ENCODE measurements at regions of chr3 and their contacts with region 1.

Region 1: DNA sequence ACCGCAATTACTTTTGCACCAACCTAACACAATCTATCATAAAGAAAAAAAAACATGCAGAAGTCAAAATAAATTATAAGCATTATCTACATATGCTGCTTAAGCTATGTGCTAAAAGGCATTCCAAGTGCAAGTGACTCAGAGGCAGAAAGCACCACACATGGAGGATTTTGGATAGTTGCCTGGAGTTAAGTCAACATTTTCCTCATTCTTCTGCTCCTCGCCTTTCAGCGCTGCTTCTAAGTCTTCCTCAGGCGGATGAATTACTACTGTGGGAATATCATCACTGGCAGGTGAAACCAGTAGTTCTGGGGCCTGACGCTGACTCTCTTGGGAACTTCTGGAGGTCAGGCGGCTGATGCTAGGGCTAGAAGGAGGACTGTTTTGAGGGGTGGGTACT is 53.1 kb downstream of the SLC4A7 start:
- DNase-seq: peak; percentile 99
- ATAC-seq: peak; percentile 92
- H3K4me3 ChIP-seq: no peak overlapping the region
- H3K27ac ChIP-seq: no peak overlapping the region
- H3K4me1 ChIP-seq: peaks cover 5% of the 10 kb centered on the region
- H3K27me3 ChIP-seq: no peaks in the 10 kb centered on the region
- CTCF ChIP-seq: no peak
- POLR2A ChIP-seq: no peak
- RAD21 ChIP-seq: peak; percentile 26; the same call in 1 of the 2 replicates

Region 2: DNA sequence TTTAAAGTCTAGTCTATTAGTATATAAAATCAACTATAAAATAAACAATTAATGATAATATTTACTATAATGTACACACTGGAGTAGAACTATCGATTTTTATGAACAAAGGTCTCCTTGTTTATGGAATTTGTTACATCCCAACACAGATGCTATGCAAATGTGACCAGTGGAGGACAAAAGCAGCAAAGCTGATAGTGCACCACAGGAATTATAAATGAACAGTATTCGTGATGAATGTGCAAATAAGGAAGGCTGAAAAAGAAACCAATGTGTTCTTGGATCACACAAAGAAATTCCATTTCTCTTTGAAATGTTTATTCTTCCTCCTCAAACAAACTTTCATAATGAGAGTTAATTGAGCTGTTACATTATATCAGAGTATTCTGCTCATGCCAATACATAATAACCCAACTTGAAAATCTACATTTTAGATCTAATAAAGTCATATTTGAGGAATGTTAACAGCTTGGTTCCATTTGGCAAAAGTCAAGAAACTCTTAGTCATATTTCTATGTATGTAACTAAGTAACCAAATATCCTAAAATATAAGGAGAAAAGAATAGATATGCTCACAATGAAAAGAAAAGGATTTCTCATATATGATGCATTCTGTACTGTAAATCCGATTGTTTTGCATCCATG is 141.2 kb before region 1 on chr3:
- CTCF ChIA-PET with region 1: no interaction called
- POLR2A ChIA-PET with region 1: no interaction called
- dilution Hi-C with region 1: no loop called
- in situ Hi-C with region 1: no loop called
- intact Hi-C with region 1: no loop called
- DNase-seq: peak; percentile 56
- ATAC-seq: peak; percentile 50
- H3K4me3 ChIP-seq: no peak overlapping the region
- H3K27ac ChIP-seq: peak overlapping the region; percentile 37; the same call in 1 of the 2 replicates
- H3K4me1 ChIP-seq: peaks cover 9% of the 10 kb centered on the region
- H3K27me3 ChIP-seq: no peaks in the 10 kb centered on the region
- CTCF ChIP-seq: no peak
- POLR2A ChIP-seq: no peak
- RAD21 ChIP-seq: no peak

Region 3: GRCh38 chr3:27533718-27534573 is 102.8 kb after region 1 on chr3:
- CTCF ChIA-PET with region 1: no interaction called
- POLR2A ChIA-PET with region 1: no interaction called
- dilution Hi-C with region 1: no loop called
- in situ Hi-C with region 1: no loop called
- intact Hi-C with region 1: loop called (anchors 5 kb)
- DNase-seq: peak; percentile 99
- ATAC-seq: peak; percentile 93
- H3K4me3 ChIP-seq: no peak overlapping the region
- H3K27ac ChIP-seq: peak overlapping the region; percentile 77
- H3K4me1 ChIP-seq: peaks cover 21% of the 10 kb centered on the region
- H3K27me3 ChIP-seq: no peaks in the 10 kb centered on the region
- CTCF ChIP-seq: peak; percentile 76
- POLR2A ChIP-seq: no peak
- RAD21 ChIP-seq: peak; percentile 72

Region 4: DNA sequence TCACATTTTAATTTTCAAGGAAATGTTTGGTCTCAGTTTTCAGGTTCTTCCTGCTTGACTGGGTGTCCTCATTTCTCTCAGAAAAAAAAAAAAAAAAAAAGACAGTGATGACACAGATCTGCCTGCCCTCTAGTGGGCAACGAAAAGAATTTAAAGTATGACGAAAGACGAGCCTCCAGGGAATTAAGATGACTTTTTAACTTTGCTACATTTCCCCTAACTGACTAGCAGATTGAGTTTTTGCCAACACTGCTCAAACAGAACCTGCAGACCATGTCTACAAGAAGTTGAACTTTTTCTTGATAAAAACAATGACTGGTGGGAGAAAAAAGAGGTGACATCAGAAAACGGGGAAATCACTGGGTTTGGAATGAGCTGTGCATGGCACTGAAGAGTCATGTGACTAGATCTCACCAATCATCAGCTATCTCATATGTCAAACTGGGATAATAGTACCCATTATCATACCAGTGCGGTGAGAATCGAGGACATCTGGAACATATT is 250.2 kb after region 1 on chr3:
- CTCF ChIA-PET with region 1: interaction called, 3 read pairs
- POLR2A ChIA-PET with region 1: no interaction called
- dilution Hi-C with region 1: no loop called
- in situ Hi-C with region 1: no loop called
- intact Hi-C with region 1: loop called (anchors 5 kb)
- DNase-seq: peak; percentile 83
- ATAC-seq: peak; percentile 52
- H3K4me3 ChIP-seq: peak overlapping the region; percentile 28; the same call in 1 of the 2 replicates
- H3K27ac ChIP-seq: peak overlapping the region; percentile 55; the same call in 1 of the 2 replicates
- H3K4me1 ChIP-seq: peaks cover 10% of the 10 kb centered on the region
- H3K27me3 ChIP-seq: no peaks in the 10 kb centered on the region
- CTCF ChIP-seq: peak; percentile 81
- POLR2A ChIP-seq: no peak
- RAD21 ChIP-seq: peak; percentile 72

Region 5: DNA sequence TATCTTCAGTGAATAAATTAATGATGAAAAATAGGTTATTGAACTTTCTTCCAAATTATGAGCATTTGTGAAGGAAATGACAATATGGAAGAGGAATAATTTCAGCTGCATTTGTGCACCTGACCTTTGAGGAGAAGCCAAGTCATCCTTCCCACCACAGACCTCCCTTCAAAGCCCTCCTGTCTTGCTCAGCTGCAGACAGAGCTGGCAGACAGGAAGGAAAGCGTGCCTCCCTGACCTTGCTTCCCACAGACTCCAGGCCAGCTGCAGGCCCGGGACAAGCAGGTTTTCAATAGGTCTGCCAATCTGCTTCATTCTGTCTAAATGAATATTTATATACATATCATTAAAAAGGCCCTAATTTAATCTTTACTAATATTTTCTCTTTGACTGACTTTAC is 1696.9 kb after region 1 on chr3:
- CTCF ChIA-PET with region 1: no interaction called
- POLR2A ChIA-PET with region 1: no interaction called
- dilution Hi-C with region 1: no loop called
- in situ Hi-C with region 1: no loop called
- intact Hi-C with region 1: no loop called
- DNase-seq: peak; percentile 49
- ATAC-seq: no peak
- H3K4me3 ChIP-seq: no peak overlapping the region
- H3K27ac ChIP-seq: no peak overlapping the region
- H3K4me1 ChIP-seq: no peaks in the 10 kb centered on the region
- H3K27me3 ChIP-seq: no peaks in the 10 kb centered on the region
- CTCF ChIP-seq: no peak
- POLR2A ChIP-seq: no peak
- RAD21 ChIP-seq: no peak